MCF 10A (cell line): ENCODE measurements at regions of chr4 and their contacts with region 1.

Region 1: GRCh38 chr4:88456757-88457306 is at the start of gene HERC5:
- DNase-seq: peak; percentile 95
- H3K4me3 Mint-ChIP-seq: peak within 1 kb of the TSS; percentile 95
- H3K27ac Mint-ChIP-seq: peak within 1 kb of the TSS; percentile 57
- H3K4me1 Mint-ChIP-seq: no peaks in the 10 kb centered on the region
- H3K27me3 Mint-ChIP-seq: no peaks in the 10 kb centered on the region
- CTCF ChIP-seq: peak; percentile 62
- total RNA-seq, gene HERC5: 0.54 and 0.63 TPM in 2 replicates

Region 2: GRCh38 chr4:88033309-88033708 is 423.5 kb before region 1 on chr4:
- CTCF ChIA-PET with region 1: interaction called, 7 read pairs
- POLR2A ChIA-PET with region 1: no interaction called
- intact Hi-C with region 1: loop called (anchors 10 kb)
- DNase-seq: peak; percentile 77
- H3K4me3 Mint-ChIP-seq: no peak overlapping the region
- H3K27ac Mint-ChIP-seq: no peak overlapping the region
- H3K4me1 Mint-ChIP-seq: peaks cover 10% of the 10 kb centered on the region
- H3K27me3 Mint-ChIP-seq: no peaks in the 10 kb centered on the region
- CTCF ChIP-seq: peak; percentile 69

Region 3: DNA sequence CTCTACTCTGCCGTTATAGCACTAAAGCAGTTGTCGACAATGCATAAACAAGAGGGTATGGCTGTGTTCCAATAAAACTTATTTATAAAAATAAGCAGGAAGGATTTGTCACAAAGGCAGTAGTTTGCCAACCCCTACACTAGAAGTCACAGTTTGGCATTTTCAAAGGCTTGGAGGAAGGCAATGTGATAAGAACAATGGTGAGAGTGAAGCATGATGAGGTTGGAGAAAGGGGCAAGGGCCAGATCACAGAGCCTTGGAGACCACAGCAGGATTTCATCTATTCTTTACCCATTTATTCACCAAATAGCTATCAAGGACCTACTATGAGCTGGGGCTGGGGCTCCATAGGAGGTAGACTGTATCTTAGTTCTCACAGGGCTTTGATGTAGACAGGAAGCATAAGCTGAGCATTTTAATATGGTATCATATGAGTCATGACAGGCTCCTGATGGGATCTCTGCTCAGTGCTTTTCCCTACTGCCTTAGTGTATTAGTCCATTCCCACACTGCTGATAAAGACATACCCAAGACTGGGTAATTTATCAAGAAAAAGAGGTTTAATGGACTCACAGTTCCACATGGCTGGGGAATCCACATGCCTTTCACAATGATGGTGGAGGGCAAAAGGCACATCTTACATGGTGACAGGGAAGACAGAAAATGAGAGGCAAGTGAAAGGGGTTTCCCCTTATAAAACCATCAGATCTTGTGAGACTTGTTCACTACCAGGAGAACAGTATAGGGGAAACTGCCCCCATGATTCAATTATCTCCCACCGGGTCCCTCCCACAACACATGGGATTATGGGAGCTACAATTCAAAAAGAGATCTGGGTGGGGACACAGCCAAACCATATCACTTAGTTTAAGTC is 231.4 kb before region 1 on chr4:
- CTCF ChIA-PET with region 1: interaction called, 13 read pairs
- POLR2A ChIA-PET with region 1: no interaction called
- intact Hi-C with region 1: no loop called
- DNase-seq: no peak
- H3K4me3 Mint-ChIP-seq: no peak overlapping the region
- H3K27ac Mint-ChIP-seq: no peak overlapping the region
- H3K4me1 Mint-ChIP-seq: no peaks in the 10 kb centered on the region
- H3K27me3 Mint-ChIP-seq: no peaks in the 10 kb centered on the region
- CTCF ChIP-seq: no peak

Region 4: GRCh38 chr4:88369936-88370335 is 86.9 kb before region 1 on chr4:
- CTCF ChIA-PET with region 1: interaction called, 11 read pairs
- POLR2A ChIA-PET with region 1: interaction called, 3 read pairs
- intact Hi-C with region 1: loop called (anchors 1 kb)
- DNase-seq: no peak
- H3K4me3 Mint-ChIP-seq: no peak overlapping the region
- H3K27ac Mint-ChIP-seq: no peak overlapping the region
- H3K4me1 Mint-ChIP-seq: no peaks in the 10 kb centered on the region
- H3K27me3 Mint-ChIP-seq: no peaks in the 10 kb centered on the region
- CTCF ChIP-seq: no peak

Region 5: GRCh38 chr4:88378691-88379559 is 77.9 kb before region 1 on chr4 and contains the start of gene HERC6:
- CTCF ChIA-PET with region 1: no interaction called
- POLR2A ChIA-PET with region 1: interaction called, 4 read pairs
- intact Hi-C with region 1: loop called (anchors 1 kb)
- DNase-seq: peak; percentile 94
- H3K4me3 Mint-ChIP-seq: peak within 1 kb of the TSS; percentile 90
- H3K27ac Mint-ChIP-seq: peak within 1 kb of the TSS; percentile 66
- H3K4me1 Mint-ChIP-seq: no peaks in the 10 kb centered on the region
- H3K27me3 Mint-ChIP-seq: no peaks in the 10 kb centered on the region
- CTCF ChIP-seq: peak; percentile 57
- total RNA-seq, gene HERC6: 1.7 and 2.4 TPM in 2 replicates